A549 (cell line): ENCODE measurements at regions of chr10 and their contacts with region 1.

Region 1: DNA sequence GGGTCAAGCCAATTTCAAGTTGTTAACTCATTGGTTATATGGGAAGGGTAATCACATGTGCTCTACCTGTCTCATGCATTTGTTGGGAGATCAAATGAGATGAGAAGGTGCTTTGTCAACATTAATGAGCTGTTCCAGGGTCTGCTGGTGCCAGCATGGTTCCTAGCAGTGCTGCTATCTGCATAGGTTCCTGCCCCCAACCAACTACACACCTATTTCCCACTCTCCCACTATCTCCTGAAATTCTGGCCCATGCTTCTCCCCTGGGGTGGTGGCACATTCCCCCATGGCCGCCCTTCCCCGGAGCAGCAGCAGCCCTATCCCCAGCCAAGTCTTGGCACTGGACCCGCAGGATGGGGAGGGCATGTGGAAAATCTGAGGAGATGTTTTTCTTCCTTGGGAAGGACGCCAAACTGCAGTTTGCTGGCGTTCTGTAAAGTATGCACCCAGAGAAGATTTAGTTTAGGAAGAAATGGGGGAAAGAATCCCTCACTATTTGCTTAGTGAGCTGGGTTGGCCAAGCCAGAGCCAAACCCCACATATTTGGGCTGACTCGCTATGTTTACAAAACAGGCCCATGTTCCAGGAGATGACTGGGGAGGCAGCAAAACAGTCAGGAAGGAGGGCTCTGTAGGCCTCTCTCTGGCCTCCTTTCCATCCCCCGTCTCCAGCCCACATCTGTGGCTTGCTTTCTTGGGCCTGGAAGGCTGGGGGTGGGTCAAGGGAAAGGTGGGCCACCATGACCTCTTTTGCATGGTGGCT is 42.5 kb downstream of the PPP1R3C start:
- DNase-seq: peak; percentile 57 to 96
- ATAC-seq: peak; percentile 77 to 85
- H3K4me3 ChIP-seq: 0 out of 3 replicates have a peak overlapping the region, but pooled peaks have one; percentile 0
- H3K27ac ChIP-seq: peak overlapping the region; percentile 93 to 94
- H3K4me1 ChIP-seq: peaks cover 66% of the 10 kb centered on the region
- CTCF ChIP-seq: no peak
- EP300 ChIP-seq: peak in 1 of 2 experiments; percentile 76; a peak in 3 of 5 replicates
- POLR2A ChIP-seq: no peak
- RAD21 ChIP-seq: peak; percentile 24 to 38; a peak in 3 of 5 replicates

Region 2: DNA sequence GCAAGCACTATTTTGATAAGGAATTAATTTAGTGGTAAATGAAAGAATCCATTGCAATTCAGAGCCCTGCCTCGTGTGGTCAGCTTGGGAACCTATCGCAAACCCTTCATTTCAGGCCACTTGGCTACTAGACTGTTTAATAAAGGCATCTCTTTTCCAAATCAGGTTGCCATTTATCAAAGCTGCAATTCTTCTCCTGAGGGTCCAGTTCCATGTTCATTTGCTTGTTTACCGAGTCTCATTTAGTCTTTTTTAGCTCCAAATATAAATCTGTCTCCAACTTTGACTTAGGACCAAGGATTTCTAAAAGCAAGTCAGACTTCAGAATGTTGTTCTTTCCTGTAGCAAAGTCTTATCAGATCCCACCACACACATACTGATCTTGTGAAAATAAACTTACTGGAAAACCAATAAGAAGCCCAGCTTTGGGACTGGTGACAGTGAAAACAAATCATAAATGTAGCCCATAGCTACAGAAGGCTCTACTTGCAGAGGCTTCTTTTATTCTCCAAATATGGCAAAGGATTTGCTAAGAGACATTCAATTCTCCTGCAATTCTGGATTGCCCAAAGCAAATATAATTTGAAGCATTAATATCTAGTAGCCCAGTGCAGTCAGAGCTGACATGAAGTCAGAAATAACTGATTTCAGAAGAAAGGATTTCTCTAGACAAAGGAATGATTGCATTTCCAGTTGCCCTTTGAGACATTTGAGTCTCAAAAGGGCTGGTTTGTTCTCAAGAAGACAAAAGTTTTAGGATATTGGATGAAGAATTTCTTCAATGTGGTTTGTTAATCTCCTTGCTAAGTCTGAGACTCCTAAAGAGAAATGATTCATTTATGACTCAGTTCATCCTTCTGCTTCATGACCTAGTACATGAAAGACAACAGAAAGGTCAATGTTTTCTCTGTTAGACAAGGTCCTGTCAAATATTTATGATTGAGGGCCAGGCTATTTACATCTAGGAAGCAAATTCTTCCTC is 14.5 kb after region 1 on chr10:
- CTCF ChIA-PET with region 1: interaction called, 14 read pairs
- POLR2A ChIA-PET with region 1: no interaction called
- DNase-seq: peak in 1 of 2 experiments; percentile 48
- ATAC-seq: peak; percentile 32 to 54; a peak in 2 of 6 replicates
- H3K4me3 ChIP-seq: no peak overlapping the region
- H3K27ac ChIP-seq: peak overlapping the region; percentile 73 to 81
- H3K4me1 ChIP-seq: peaks cover 53% of the 10 kb centered on the region
- CTCF ChIP-seq: no peak
- EP300 ChIP-seq: peak; percentile 24 to 35; a peak in 1 of 5 replicates
- POLR2A ChIP-seq: no peak
- RAD21 ChIP-seq: 0 out of 5 replicates have a peak, but pooled peaks of 1 of the 2 experiments have one; percentile 21